Left cardiac atrium (tissue), 4 donors: ENCODE measurements at regions of chr12 and their contacts with region 1.

Region 1: DNA sequence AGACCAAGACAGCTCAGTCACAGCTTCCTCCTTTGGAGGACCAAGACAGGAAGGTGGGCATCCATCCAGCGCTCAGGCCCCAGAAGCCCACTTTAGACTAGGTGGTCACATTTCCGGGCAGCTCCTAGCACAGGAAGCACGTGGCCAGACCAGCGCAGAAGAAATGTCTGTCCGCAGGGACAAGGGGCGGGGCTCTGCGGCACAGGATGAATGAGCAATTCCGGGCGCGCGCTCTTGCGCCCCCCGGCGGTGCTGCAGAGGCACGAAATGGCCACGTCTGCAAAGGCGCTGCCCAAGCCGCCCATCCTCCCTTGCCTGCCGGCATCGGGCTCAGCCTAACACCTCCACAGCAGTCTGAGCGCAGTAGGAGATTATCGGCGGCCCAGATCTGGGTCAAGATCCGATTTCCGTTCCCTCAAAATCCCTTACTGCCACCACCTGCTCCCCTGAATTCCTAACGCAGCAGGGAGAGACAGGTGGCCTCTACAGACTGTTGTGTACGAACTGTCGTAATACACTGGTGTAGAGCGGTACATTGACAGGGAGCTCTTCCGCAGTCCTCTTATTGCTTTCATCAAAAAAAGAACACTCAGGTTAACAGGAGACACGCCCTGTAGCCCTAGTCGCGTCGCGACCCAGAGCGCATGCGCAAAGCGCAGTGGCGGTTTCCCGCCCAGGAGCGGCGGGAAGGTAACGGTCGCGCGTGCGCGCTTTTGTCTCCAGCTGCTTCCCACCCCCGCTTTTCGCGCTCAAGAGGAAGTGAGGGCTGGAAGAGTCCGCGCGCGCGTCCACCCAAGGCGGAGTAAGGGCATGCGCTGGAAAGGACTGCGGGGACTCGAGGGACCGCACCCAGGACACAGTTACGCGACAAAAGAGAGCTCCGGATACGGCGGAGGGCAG is 794 bp downstream of the TUBA1B start:
- DNase-seq: peak; percentile 97
- ATAC-seq: peak; percentile 83 to 88

Region 2: GRCh38 chr12:49188914-49189367 is 58.5 kb after region 1 on chr12 and contains the start of gene TUBA1A:
- intact Hi-C with region 1: loop called (anchors 5 to 10 kb)
- DNase-seq: peak; percentile 93
- ATAC-seq: peak; percentile 93 to 95
- total RNA-seq, gene TUBA1A: 119 to 134 TPM

Region 3: DNA sequence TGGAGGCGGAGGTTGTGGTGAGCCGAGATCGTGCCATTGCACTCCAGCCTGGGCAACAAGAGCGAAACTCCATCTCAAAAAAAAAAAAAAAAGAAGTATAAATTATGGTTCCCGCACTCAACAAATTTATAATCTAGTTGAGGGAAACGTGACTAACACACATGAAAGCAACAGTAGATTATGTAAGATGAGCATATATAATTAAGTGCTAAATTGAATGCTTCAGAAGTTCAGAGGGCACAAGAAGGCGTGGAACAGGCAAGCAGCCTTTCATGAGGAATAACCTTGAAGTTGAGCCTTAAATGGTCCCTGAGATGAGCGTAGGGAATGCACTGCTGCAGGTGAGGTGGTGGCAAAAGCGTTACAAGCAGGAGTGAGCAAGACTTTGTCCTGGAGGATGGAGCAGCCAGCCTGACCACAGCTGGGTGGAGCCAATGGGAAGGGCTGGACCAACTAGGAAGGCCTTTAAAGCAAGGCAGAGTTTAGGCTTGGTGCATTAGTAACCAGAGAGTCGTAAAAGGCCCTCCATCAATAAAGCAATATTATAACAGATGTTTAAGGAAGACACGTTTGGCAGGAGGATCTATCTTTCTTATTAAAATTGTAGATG is 89.1 kb after region 1 on chr12:
- intact Hi-C with region 1: no loop called
- DNase-seq: no peak
- ATAC-seq: no peak

Region 4: GRCh38 chr12:50132505-50133135 is 1002.2 kb after region 1 on chr12:
- intact Hi-C with region 1: no loop called
- DNase-seq: no peak
- ATAC-seq: no peak